Tibial artery (tissue), 4 donors: ENCODE measurements at regions of chr6 and their contacts with region 1.

Region 1: DNA sequence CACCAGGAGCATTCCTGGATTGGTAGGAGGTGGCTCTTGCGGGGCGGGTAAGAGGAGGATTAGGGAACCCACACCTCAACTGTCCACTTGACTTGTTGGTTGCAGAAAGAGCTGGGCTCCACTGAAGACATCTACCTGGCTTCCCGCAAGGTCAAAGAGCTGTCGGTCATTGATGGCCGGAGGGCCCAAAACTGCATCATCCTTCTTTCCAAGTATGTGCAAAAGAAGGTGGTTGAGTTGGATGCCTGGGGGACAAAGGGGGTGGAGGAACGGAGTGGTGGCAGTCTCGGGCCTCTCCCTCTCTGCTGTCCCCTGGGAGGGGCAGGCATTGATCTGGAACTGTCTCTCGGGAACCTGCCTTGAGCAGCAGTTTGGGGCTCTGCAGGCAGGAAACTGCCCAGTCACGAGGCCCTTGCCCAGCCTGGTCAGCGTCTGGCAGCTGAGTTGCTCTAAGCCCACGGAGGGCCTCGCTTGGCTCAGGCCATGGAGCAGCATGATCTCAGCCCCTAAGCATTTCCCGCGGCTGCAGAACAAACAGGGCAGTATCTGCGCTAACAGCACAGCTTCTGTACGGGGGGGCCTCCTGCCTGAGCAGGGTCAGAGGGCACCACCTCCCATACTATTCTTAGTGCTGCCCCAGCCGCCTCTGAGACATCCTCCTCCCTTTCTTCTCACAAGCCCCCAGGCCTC is 46.7 kb downstream of the MOCS1 start:
- DNase-seq: peak; percentile 84 to 96
- H3K4me3 ChIP-seq: peak overlapping the region in 1 of 2 donors; percentile 8
- H3K27ac ChIP-seq: peak overlapping the region; percentile 79 to 84
- H3K4me1 ChIP-seq: peaks cover 0 to 97% (median 58%) of the 10 kb centered on the region in 4 donors
- H3K27me3 ChIP-seq: no peaks in the 10 kb centered on the region
- CTCF ChIP-seq: no peak

Region 2: DNA sequence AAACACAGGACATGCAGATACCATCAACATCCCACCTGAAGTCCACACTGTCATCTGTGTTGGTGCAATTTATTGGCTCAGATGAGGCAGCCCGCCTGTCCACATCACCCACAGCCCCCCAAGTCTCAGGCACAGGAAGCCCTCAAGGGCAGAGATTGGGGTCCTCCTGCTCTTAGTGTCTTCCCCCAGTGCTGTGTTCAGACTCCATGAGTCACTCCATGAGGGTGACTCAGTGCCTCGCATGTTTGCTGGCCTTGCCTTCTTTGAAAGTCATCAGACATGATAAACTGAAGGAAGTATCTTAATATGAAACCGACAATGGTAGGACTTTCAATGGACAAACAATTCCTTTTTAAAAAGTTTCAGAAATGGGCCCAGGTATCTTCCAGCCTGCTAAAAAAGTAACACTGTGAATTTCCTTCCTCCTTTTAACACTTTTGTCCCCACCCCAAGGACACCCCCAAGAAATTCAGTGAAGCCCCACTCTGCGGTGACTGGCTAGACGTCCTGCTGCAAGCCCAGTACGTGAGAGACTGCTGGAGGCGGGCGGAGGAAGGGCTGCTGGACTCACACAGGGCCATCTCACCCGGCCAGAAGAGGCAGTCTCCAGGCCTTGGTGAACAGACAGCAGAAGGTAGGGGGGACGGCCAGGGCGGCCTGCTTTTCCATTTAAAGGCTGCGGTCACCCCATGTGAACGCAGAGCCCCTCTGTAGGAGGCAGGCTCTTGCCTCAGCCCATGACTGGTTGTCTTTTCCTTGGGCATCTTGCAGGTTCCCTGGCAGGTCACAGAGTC is 522.0 kb before region 1 on chr6:
- intact Hi-C with region 1: loop called (anchors 2 kb)
- DNase-seq: no peak
- H3K4me3 ChIP-seq: no peak overlapping the region
- H3K27ac ChIP-seq: no peak overlapping the region
- H3K4me1 ChIP-seq: peaks cover 0 to 14% (median 7%) of the 10 kb centered on the region in 4 donors
- H3K27me3 ChIP-seq: no peaks in the 10 kb centered on the region
- CTCF ChIP-seq: no peak

Region 3: DNA sequence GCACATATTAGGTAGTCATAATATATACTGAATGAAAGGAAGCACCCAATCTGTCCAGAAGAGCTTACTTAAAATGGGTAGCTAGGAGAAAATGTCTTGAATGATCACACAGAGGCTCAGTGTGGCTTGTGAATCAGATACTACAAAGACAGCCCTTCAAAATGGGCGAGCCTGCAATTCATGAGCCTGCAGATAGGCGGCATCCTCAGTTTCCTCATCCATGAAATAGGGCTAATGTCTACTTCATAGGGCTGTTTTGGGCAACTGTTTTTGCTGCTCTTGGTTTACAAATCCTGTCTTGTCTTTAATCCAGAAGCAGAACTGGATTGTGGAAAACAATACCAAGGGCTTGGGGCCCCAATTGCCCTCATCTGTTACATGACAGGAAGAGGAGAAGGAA is 435.7 kb before region 1 on chr6:
- intact Hi-C with region 1: no loop called
- DNase-seq: no peak
- H3K4me3 ChIP-seq: no peak overlapping the region
- H3K27ac ChIP-seq: no peak overlapping the region
- H3K4me1 ChIP-seq: no peaks in the 10 kb centered on the region
- H3K27me3 ChIP-seq: no peaks in the 10 kb centered on the region
- CTCF ChIP-seq: peak in 1 of 2 experiments; percentile 9

Region 4: GRCh38 chr6:39804466-39805065 is 83.0 kb before region 1 on chr6:
- intact Hi-C with region 1: loop called (anchors 5 kb)
- DNase-seq: no peak
- H3K4me3 ChIP-seq: no peak overlapping the region
- H3K27ac ChIP-seq: peak overlapping the region in 1 of 2 donors; percentile 25
- H3K4me1 ChIP-seq: peaks cover 3 to 91% (median 59%) of the 10 kb centered on the region in 4 donors
- H3K27me3 ChIP-seq: no peaks in the 10 kb centered on the region
- CTCF ChIP-seq: no peak